Ascending aorta (tissue), 2 donors: ENCODE measurements at regions of chr2 and their contacts with region 1.

Region 1: GRCh38 chr2:26612522-26613240 is 28.5 kb downstream of the CIB4 start:
- DNase-seq: no peak
- H3K4me3 ChIP-seq: no peak overlapping the region
- H3K27ac ChIP-seq: peak overlapping the region; percentile 46 to 57
- H3K4me1 ChIP-seq: peaks cover 16 to 28% of the 10 kb centered on the region in 2 donors
- H3K27me3 ChIP-seq: no peaks in the 10 kb centered on the region
- CTCF ChIP-seq: no peak

Region 2: DNA sequence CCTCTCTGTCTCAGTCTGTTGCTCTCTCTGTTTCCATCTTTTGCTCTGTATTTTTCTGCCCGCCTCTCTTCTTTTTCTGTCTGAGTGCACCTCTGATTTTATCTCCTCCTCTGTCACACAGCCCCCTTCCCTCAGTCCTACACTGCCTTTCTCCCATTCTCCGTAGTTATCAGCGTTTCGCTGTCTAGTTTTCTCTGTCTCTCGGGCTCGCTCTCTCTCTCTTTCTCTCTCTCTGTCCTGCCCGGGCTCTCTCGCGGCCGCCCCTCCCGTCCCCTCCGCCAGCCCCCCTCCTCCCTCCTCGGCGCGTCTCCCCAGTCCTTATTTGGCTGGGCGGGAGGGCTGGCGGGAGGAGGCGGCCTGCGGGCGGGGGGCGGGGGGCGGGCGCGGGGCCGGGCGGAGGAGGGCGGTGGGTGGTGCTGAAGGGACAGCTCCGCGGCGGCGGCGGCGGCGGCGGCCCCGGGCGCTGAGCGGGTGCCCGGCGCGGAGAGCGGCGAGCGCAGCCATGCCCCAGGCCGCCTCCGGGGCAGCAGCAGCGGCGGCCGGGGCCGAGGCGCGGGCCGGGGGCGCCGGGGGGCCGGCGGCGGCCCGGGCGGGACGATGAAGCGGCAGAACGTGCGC is 79.7 kb after region 1 on chr2 and contains the start of gene KCNK3:
- intact Hi-C with region 1: loop called (anchors 5 kb)
- DNase-seq: peak in 1 of 2 donors; percentile 84
- H3K4me3 ChIP-seq: peak within 1 kb of the TSS; percentile 66 to 80
- H3K27ac ChIP-seq: peak within 1 kb of the TSS; percentile 88 to 90
- H3K4me1 ChIP-seq: peaks cover 14 to 19% of the 10 kb centered on the region in 2 donors
- H3K27me3 ChIP-seq: no peaks in the 10 kb centered on the region
- CTCF ChIP-seq: no peak
- total RNA-seq, gene KCNK3: 7.2 TPM

Region 3: DNA sequence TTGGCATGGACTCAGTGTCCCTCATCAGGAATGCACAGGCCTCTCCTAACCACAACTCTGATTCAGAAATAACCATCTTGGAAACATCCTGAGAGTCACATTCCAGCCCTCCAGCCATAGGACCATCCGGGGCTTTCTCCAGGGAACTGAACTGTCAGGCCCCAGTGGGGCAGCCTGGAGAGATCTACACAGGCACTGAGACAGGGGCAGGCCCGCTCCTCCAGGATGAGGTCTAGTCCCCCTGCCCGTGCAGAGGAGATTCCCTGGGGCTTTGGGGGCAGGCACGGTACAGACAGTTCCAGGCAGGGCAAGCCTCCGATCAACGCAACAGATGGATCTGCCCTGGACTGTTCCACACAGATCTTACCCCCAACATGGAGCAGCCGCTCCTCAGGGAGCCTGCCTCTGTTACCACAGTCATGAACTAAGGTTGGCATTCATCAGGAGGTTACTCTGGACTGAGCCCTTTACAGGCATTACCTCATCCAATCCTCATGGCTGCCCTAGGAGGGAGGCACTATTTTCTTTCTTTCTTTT is 91.8 kb after region 1 on chr2:
- intact Hi-C with region 1: no loop called
- DNase-seq: no peak
- H3K4me3 ChIP-seq: no peak overlapping the region
- H3K27ac ChIP-seq: peak overlapping the region in 1 of 2 donors; percentile 53
- H3K4me1 ChIP-seq: peaks cover 0 to 7% of the 10 kb centered on the region in 2 donors
- H3K27me3 ChIP-seq: no peaks in the 10 kb centered on the region
- CTCF ChIP-seq: no peak